ENCODE measurements at regions of chr1 and their contacts with region 1.

Region 1: DNA sequence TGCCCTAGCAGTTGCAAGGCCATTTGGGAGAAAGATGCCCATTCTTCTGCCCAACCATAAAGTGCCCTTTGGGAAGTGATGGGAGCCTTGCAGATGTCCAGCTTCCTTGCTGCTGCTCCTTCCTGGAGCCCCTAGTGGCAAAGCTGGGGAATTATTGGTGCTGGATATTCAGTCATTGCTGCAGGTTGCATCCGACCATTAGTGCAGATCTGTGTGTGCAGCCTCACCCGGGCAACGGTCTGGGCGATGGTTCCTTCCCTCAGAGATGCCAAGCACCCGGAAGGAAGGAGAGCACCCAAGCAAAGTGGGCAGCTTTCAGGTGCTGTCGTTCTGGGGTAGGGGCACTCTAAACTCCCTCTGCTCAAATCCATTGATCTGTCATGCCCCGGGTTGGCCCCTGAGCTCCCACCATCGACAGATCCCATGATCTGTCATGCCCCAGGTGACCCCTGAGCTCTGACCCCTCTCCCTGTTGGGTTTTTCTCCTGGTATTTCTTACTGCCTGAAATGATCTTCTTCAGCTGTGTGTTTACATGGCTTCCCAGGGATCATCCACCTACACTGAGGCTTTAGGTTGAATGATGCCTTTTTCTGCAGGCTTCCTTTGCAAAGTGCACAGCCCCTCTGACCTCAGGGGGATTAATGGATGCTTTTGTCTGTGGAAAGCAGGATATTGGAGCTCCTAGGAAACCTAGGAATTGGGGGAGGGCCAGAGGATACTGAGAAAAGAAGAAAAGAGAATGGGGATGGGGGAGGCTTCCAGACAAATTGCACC is 467.5 kb downstream of the PTPRU start:
- DNase-seq: peak; percentile 59
- ATAC-seq: peak; percentile 54
- H3K4me3 ChIP-seq: no peak overlapping the region
- H3K27ac ChIP-seq: no peak overlapping the region
- H3K4me1 ChIP-seq: peaks cover 13% of the 10 kb centered on the region
- H3K27me3 ChIP-seq: no peaks in the 10 kb centered on the region
- CTCF ChIP-seq: peak; percentile 78

Region 2: DNA sequence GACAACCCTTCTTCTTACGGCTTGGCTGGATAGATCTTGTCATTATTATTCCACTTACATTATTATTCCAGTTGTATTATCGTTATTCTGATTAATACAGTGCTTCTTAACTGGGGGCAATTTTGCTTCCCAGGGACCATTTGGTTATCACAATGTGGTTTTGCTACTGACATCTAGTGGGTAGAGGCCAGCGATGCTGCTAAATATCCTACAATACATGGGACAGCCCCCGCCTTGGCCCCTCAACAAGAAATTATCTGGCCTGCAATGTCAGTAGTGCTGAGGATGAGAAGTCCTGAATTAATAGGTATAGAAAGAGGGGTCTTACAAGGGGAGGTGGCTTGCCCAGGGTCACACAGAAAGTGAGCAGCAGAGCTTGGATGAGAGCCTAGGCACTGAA is 361.8 kb before region 1 on chr1:
- CTCF ChIA-PET with region 1: no interaction called
- POLR2A ChIA-PET with region 1: no interaction called
- intact Hi-C with region 1: loop called (anchors 5 kb)
- DNase-seq: peak; percentile 17
- ATAC-seq: 0 out of 2 replicates have a peak, but pooled peaks have one; percentile 29
- H3K4me3 ChIP-seq: no peak overlapping the region
- H3K27ac ChIP-seq: no peak overlapping the region
- H3K4me1 ChIP-seq: no peaks in the 10 kb centered on the region
- H3K27me3 ChIP-seq: peaks cover 30% of the 10 kb centered on the region; the same call in 1 of the 2 replicates
- CTCF ChIP-seq: peak; percentile 51

Region 3: DNA sequence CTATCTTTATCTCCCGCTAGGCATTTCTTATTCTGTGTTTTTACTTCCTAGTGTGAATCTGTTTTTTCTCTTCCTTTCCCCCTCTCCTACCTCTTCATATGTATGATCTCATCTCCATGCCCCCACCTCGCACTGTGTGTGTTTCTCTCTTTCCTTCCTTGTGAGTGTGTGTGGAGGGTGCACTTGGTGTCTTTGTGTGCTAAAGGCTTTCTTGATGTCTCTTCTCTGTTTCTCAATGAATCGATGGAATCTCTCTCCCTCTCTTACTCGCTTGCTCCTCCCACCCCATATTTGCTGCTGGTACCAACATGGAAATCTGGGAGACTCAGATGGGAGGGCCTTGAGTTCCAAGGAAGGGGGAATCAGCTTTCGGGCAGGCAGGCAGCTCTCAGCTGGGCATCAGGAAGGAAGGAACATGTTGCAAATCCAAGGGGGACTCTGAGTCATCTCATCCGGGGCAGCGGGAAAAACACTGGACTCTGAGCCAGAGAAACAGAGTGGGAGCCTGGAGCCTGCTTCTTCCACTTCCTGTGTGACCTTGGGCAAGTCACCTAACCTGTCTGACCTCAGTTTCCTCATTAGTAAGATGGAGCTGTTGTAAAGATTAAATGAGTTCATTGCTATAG is 319.9 kb before region 1 on chr1:
- CTCF ChIA-PET with region 1: no interaction called
- POLR2A ChIA-PET with region 1: no interaction called
- intact Hi-C with region 1: no loop called
- DNase-seq: peak; percentile 27
- ATAC-seq: peak; percentile 55
- H3K4me3 ChIP-seq: no peak overlapping the region
- H3K27ac ChIP-seq: no peak overlapping the region
- H3K4me1 ChIP-seq: peaks cover 16% of the 10 kb centered on the region; the same call in 1 of the 2 replicates
- H3K27me3 ChIP-seq: no peaks in the 10 kb centered on the region
- CTCF ChIP-seq: no peak

Region 4: DNA sequence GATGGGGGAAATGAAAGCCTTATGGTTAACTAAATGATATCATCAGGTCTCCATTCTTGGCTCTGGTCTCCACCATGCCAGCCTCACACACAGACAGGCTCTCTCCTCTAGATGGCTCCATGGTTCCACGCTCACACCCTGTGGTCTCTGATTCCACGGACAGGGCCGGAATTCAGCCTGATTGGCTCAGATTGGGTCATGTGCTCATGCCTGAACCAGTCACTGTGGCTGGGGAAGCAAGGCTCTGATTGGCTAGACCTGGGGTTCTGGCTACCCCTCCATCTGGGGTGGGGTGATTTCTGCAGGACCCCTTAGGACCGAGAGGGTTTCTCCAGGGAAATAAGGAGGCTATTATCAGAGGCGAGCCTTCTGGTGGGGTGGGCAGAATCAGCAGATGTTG is 190.4 kb before region 1 on chr1:
- CTCF ChIA-PET with region 1: no interaction called
- POLR2A ChIA-PET with region 1: no interaction called
- intact Hi-C with region 1: loop called (anchors 2 kb)
- DNase-seq: peak; percentile 85
- ATAC-seq: peak; percentile 99
- H3K4me3 ChIP-seq: no peak overlapping the region
- H3K27ac ChIP-seq: no peak overlapping the region
- H3K4me1 ChIP-seq: no peaks in the 10 kb centered on the region
- H3K27me3 ChIP-seq: 0 out of 2 replicates have a peak, but pooled peaks cover 7% of the 10 kb centered on the region
- CTCF ChIP-seq: peak; percentile 93

Region 5: GRCh38 chr1:29688471-29689365 is 15.1 kb before region 1 on chr1:
- CTCF ChIA-PET with region 1: no interaction called
- POLR2A ChIA-PET with region 1: no interaction called
- intact Hi-C with region 1: no loop called
- DNase-seq: peak; percentile 58
- ATAC-seq: peak; percentile 62
- H3K4me3 ChIP-seq: peak overlapping the region; percentile 26; the same call in 1 of the 2 replicates
- H3K27ac ChIP-seq: peak overlapping the region; percentile 35
- H3K4me1 ChIP-seq: peaks cover 24% of the 10 kb centered on the region
- H3K27me3 ChIP-seq: no peaks in the 10 kb centered on the region
- CTCF ChIP-seq: no peak

Region 6: DNA sequence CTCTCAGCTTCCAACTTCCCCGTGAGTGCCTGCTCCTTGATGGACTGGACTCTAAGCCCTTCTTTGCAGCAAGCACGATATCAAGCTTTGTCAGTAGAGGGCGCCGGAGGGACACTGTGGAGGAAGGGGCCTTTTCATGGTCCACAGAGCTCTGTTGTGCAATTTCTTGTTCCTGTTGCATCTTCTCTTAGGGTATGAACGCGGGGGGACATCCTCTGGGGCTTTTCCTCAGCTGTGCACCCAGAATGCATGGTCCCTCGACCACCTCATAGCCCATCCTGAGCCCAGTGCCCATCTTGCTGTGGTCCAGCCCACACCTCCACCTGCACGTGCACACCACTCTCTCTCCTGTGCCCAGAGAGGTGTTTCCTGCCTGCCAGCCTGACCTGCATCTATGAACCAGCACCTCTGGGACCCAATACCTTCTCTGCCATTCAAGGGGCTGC is 89.3 kb after region 1 on chr1:
- CTCF ChIA-PET with region 1: interaction called, 3 read pairs
- POLR2A ChIA-PET with region 1: no interaction called
- intact Hi-C with region 1: loop called (anchors 5 kb)
- DNase-seq: peak; percentile 92
- ATAC-seq: peak; percentile 90
- H3K4me3 ChIP-seq: no peak overlapping the region
- H3K27ac ChIP-seq: no peak overlapping the region
- H3K4me1 ChIP-seq: peaks cover 19% of the 10 kb centered on the region
- H3K27me3 ChIP-seq: no peaks in the 10 kb centered on the region
- CTCF ChIP-seq: peak; percentile 84

Region 7: GRCh38 chr1:30379684-30380624 is 676.2 kb after region 1 on chr1:
- CTCF ChIA-PET with region 1: no interaction called
- POLR2A ChIA-PET with region 1: no interaction called
- intact Hi-C with region 1: loop called (anchors 5 kb)
- DNase-seq: peak; percentile 78
- ATAC-seq: peak; percentile 80
- H3K4me3 ChIP-seq: no peak overlapping the region
- H3K27ac ChIP-seq: no peak overlapping the region
- H3K4me1 ChIP-seq: no peaks in the 10 kb centered on the region
- H3K27me3 ChIP-seq: peaks cover 12% of the 10 kb centered on the region; the same call in 1 of the 2 replicates
- CTCF ChIP-seq: peak; percentile 78

Region 8: GRCh38 chr1:30707412-30708360 is 1003.9 kb after region 1 on chr1:
- CTCF ChIA-PET with region 1: interaction called, 3 read pairs
- POLR2A ChIA-PET with region 1: no interaction called
- intact Hi-C with region 1: loop called (anchors 5 kb)
- DNase-seq: peak; percentile 77
- ATAC-seq: peak; percentile 93
- H3K4me3 ChIP-seq: no peak overlapping the region
- H3K27ac ChIP-seq: no peak overlapping the region
- H3K4me1 ChIP-seq: no peaks in the 10 kb centered on the region
- H3K27me3 ChIP-seq: peaks cover 8% of the 10 kb centered on the region; the same call in 1 of the 2 replicates
- CTCF ChIP-seq: peak; percentile 90

Measured in PC-3 (cell line).